ENCODE measurements at regions of chr16 and their contacts with region 1.

Region 1: DNA sequence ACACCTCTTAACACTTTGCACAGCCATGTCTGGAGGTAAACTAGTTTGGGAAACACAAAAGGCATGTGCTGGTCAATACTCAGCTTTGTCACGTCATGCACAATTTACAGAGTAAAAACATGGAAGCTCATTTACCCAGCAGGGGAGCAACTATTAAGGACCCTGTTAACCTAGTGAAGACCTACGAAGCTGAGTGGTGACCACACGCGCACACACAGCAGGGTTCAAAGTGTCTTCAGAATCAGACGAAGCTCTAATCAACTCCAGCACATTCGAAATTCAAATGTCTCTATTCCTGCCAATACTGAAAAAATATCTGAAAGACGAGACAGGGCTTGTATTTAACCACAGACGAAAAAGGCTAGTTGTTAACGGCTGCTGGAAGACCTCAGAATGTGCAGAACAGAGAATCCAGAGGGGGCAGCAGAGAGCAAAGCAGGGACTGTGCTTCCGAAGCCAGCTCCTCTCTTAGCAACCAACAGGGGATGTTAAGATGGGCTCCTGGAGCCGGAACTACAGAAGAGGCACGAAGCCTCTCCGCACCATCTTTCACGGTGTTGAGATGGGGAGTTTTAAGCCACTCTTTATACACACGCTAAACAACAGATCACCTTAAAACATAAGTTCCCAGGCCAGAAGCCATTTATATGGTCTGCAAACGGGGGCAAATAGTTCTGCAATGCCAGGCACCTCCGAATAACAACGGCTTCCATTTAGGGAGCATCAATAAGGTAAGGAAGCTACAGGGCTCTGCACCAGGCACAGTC is 45.7 kb downstream of the CMTM4 start:
- DNase-seq: peak; percentile 81
- CTCF ChIP-seq: peak; percentile 92

Region 2: DNA sequence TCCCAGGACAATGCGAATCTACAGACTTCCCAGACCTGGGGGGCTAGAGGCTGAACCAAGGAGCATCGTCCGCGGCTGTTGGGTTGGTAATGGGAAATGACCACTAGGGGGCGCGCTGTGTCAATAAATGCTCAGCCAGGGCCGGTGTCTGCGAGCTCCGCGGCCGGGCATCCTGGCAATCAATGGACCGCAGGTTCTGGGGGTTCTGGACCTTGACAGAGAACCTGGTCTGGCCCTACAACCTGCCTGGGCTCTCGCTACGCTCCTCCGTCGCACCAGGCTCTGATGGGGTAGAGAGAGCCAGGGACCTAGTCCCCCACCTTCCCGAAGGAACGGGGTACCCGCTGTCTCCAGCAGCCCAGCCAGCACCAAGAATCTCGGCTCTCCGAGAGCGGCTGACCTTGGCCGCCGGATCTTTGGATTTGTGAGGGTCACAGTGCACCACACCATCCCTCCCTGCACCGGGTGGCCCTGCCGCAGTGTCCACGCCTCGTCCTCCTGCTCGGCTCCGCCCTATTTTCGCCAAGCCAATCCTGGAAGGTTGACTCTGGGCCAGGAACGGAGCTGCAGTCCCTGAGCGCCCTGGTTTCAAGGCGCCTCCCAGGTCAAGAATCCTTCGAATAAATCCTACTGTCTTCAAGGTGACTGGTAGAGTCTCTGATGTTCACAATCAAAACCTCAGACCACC is 244.2 kb before region 1 on chr16:
- CTCF ChIA-PET with region 1: interaction called, 12 read pairs
- POLR2A ChIA-PET with region 1: no interaction called
- DNase-seq: peak; percentile 89
- CTCF ChIP-seq: peak; percentile 88

Region 3: GRCh38 chr16:66608241-66609138 is 42.4 kb before region 1 on chr16:
- CTCF ChIA-PET with region 1: interaction called, 33 read pairs
- POLR2A ChIA-PET with region 1: no interaction called
- DNase-seq: peak; percentile 90
- CTCF ChIP-seq: peak; percentile 86

Region 4: GRCh38 chr16:66639091-66639885 is 11.6 kb before region 1 on chr16:
- CTCF ChIA-PET with region 1: interaction called, 58 read pairs
- POLR2A ChIA-PET with region 1: no interaction called
- DNase-seq: no peak
- CTCF ChIP-seq: no peak

Region 5: GRCh38 chr16:66677179-66677578 is 26.3 kb after region 1 on chr16:
- CTCF ChIA-PET with region 1: interaction called, 14 read pairs
- POLR2A ChIA-PET with region 1: no interaction called
- DNase-seq: no peak
- CTCF ChIP-seq: no peak

Region 6: DNA sequence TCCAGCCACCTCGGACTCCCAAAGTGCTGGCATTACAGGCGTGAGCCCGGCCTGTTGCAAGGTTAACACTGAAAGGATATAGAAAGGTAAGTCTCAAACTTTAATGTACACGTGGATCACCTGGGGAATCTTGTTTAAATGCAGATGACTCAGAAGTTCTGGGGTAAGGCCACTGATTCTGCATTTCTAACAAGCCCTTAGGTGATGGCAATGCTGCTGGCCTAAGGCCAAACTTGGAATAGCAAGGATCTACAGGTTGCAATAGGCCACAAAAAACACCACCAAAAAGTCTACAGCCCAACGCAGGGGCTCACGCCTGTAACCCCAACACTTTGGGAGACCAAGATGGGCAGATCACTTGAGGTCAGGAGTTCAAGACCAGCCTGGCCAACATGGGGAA is 41.4 kb after region 1 on chr16:
- CTCF ChIA-PET with region 1: interaction called, 11 read pairs
- POLR2A ChIA-PET with region 1: no interaction called
- DNase-seq: no peak
- CTCF ChIP-seq: no peak

Region 7: GRCh38 chr16:66872943-66873684 is 222.2 kb after region 1 on chr16:
- CTCF ChIA-PET with region 1: interaction called, 13 read pairs
- POLR2A ChIA-PET with region 1: no interaction called
- DNase-seq: peak; percentile 88
- CTCF ChIP-seq: peak; percentile 96